ENCODE measurements at regions of chr19 and their contacts with region 1.

Region 1: DNA sequence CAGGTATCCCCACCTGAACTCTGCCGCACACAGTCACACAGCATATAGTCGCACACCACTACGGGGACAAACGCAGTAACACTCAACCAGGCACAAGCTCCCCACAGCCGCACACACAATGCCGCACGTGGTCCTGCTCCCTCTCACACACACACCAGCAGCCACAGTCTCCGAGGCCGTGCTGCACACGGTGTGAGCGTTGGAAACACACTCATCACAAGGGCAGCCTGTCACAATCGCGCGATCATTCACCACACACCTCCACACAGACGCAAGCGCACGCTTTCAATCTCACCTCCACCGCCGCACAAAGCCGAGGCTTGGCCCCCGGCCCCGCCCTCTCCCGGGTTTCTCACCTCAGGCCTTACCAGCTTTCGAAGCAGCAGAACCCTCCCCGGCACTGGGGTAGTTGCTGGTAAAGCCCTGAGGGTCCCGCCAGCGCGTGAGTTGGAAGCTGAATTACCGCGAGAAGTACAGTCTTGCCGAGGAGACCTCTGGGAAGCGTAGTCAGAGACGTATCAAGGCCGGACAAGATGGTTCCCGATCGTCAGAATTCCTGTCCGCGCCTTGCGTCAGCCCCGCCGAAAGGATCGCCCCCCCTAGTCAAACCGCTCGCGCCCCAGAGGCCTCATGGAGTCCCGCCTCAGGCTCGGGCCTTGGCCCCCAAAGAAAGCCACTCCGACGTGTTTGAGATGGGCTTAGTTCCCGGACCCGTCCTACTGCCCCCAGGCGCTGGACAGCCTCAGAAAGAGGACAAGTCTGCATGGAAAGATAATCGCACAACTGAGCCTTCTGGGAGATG is at the start of gene ZNF566:
- DNase-seq: peak; percentile 84 to 97 (median 94)

Region 2: GRCh38 chr19:36054119-36054732 is 435.1 kb before region 1 on chr19 and contains the start of gene THAP8:
- intact Hi-C with region 1: loop called (anchors 10 kb)
- DNase-seq: peak; percentile 97 to 100 (median 99)

Region 3: DNA sequence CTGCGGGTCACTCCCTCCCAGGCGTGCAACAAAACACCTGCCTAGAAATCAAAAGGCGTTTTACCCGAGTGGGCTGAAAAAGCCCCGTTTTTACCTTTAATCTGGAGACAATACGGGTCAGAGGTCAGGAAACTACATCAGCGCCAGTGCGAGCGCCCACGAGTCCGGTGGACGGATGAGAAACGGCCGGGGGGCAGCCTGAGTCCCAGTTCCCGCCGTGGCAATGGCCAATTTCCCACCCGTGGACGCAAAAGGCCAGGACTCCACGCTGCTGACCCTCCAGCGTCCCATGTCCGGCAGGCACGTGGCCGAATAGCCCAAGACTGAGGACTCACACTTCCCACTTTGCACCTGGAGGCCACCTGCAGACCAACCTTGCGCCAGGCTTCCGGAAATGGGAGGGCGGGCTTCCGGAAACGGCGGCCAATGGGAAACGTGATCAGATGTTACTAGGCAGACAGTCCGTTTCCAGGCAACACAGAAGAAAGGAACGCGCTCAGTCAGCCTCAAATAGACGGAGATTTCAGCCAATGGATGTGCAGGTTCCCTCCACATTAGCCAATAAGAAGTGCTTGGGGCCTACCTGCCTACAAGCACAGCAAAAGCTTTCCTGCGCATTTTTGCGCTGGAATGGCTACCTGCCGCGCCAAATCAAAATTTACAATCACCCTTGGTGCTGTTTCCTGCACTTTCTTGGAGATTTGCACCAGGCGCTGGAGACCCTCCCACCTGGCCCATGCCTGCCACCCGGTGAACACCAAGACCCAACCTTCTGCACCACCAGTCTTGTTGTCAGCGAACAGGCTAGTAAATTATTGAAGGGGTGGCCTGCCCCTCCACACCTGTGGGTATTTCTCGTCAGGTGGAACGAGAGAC is 157.7 kb before region 1 on chr19:
- intact Hi-C with region 1: no loop called
- DNase-seq: peak; percentile 86 to 98 (median 94)

Region 4: DNA sequence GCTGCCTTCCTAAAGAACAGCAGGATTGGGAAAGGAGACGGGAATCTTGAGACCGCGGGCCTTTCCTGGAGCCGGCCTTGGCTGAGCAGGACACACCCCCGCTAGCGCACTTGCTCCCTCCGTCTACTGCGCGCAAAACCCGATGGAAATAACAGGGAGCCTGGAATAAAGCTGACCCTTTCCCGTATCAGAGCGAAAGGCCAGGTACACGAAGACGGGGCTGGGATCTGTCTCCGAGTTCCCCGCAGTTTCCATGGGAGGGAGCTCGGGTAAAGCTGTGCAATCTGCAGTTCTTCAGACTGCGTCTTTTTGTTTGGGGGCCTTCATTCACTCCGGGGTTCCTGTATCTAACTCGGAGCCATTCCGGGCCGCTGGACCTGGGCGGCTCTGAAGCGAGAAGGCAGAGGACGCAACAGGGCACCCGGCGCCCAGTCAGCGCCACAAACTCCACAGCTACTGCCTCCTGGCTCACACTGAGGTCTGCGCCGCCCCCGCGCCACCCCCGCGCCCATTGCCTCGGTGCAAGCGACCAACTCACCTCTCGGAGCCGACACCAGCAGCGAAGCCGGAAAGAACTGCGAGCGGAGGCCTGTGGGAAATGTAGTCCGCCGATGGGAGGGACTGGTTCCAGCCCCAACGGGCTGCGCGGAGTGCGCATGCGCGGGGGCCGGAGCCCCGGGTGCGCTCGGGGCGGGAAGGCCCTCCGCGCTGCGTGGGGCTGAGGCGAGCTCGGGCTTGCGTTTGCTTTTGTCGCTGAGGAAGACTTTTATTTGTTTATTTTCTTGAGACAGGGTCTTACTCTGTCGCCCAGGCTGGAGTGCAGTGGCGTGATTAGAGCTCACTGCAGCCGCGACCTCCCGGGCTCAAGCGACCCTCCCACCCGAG is 110.5 kb before region 1 on chr19 and contains the start of gene ZFP14:
- intact Hi-C with region 1: loop called (anchors 2 kb)
- DNase-seq: peak; percentile 91 to 98 (median 96)

Region 5: DNA sequence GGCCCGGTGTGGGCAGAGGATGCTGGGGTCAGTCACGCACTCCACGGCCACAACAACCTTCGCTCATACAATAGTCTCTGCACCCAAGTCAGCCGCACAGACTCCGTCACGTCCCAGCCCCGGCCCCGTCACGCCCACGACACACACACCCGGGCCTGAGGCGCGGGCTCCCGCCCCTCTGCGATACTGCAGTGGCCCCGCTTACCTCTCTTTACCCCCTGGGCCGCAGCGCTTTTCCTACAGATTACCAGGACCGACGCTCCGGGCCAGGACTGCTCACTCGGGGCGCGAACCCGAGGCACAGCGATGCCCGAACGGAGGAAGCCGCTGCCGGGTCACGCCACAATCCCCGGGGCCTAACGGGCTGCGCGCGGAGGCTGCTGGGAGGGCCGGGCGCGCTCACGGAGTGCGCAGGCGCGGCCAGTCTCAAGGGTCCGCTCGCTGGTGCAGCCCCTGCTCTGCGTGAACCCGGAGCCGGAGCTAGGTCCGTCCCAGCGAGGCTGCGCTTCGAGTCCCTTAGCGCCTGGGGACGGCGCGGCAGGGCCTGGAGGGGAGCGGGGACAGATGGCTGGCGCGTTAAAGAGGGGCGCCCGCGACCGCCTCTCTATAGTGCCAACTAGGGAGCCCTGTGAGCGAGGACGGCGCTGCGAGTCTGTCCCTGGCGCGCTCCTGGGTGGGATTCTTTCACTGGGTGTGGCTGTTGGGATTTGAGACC is 70.9 kb before region 1 on chr19 and contains the start of gene ZFP82:
- intact Hi-C with region 1: loop called (anchors 10 kb)
- DNase-seq: peak; percentile 57 to 92 (median 84)

Region 6: GRCh38 chr19:36573020-36573885 is 83.9 kb after region 1 on chr19 and contains the start of gene ZNF529:
- intact Hi-C with region 1: no loop called
- DNase-seq: peak; percentile 86 to 96 (median 92)

Measured in head of caudate nucleus (tissue), 42 donors.